Vagina (tissue), 2 donors: ENCODE measurements at regions of chr2 and their contacts with region 1.

Region 1: DNA sequence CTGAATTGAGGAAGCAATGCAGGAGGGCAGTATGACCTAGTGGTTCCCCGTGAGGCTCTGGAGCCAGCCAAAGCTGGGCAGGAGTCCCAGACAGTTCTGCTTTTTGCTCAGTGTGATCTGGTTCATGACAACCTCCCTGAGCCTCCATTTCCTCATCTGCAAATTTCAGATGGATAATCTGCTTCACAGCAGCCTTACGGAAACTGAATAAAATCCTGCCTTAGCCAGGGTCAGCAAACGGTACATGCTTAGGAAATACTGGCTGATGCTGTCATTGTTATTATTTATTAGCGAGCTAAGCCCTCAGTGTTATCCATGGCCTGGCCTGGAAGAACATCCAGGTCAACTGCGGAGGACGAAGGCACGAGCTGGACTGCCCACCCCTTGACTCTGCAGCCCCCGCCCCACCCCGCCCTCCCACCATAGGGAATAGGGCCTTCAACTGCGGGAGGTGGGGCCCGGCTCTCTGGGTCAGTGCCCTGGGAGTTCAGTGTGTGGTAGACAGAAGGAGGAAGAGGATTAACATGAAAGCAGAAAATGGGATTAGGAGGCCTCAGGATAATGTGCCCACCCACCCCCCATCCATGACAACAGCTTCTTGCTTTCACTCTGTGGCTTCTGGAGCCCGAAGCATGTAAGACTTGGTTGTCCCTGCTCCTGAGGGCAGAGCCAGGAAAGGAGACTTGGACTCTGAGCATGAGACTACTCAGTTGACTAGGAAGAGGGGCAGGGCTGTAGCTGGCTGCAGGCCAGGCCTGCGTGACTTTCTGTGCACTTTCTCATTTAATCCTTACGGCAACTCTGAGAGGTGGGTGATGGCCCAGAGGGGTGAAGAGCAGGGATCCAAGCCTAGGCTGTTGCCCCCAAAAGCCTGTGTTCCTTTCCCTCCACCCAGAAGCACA is 13.1 kb downstream of the PKDCC start:
- DNase-seq: peak in 1 of 2 donors; percentile 94
- H3K4me3 ChIP-seq: peak overlapping the region in 1 of 2 donors; percentile 13
- H3K27ac ChIP-seq: peak overlapping the region; percentile 79
- H3K4me1 ChIP-seq: peaks cover 43% of the 10 kb centered on the region
- H3K27me3 ChIP-seq: no peaks in the 10 kb centered on the region
- CTCF ChIP-seq: no peak
- POLR2A ChIP-seq: no peak

Region 2: DNA sequence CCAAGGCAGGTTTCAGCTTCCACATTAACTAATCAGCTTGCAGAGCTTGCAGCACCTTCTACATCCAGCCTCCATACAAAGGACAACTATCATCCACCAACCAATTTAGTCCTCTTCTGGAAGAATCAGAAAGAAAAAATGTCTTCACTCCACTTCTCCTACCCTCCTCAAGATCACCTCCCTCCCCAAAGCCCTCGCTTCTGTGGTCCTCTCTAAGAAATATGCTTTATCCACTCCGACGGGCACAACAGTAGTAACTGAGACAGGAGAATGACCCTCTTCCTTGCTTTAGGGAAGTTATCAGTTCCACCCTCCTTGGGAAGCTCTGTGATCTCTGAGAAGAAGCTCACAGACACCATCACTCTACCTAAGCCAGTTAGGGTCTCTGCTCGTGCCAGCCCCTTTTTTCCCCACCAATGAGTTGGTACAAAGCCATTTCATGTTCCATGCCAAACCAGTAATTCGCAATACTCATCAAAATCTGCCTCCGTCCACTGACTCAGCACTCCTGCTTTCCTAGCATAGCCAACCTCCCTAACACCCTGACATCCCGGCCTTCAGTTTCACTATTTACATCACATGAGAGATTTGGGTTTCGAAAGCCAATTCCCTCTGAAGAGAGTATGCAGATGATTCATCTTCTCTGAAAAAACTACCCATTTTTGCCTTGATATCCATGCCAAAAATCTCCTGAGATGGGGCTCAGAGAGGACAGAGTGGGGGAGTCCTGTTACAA is 127.2 kb before region 1 on chr2:
- intact Hi-C with region 1: loop called (anchors 5 kb)
- DNase-seq: no peak
- H3K4me3 ChIP-seq: no peak overlapping the region
- H3K27ac ChIP-seq: peak overlapping the region; percentile 46
- H3K4me1 ChIP-seq: peaks cover 45% of the 10 kb centered on the region
- H3K27me3 ChIP-seq: no peaks in the 10 kb centered on the region
- CTCF ChIP-seq: no peak
- POLR2A ChIP-seq: no peak

Region 3: GRCh38 chr2:42117923-42118753 is 57.2 kb after region 1 on chr2:
- intact Hi-C with region 1: no loop called
- DNase-seq: no peak
- H3K4me3 ChIP-seq: no peak overlapping the region
- H3K27ac ChIP-seq: no peak overlapping the region
- H3K4me1 ChIP-seq: peaks cover 28% of the 10 kb centered on the region
- H3K27me3 ChIP-seq: no peaks in the 10 kb centered on the region
- CTCF ChIP-seq: no peak
- POLR2A ChIP-seq: no peak